OCI-LY7 (cell line): ENCODE measurements at regions of chr6 and their contacts with region 1.

Region 1: DNA sequence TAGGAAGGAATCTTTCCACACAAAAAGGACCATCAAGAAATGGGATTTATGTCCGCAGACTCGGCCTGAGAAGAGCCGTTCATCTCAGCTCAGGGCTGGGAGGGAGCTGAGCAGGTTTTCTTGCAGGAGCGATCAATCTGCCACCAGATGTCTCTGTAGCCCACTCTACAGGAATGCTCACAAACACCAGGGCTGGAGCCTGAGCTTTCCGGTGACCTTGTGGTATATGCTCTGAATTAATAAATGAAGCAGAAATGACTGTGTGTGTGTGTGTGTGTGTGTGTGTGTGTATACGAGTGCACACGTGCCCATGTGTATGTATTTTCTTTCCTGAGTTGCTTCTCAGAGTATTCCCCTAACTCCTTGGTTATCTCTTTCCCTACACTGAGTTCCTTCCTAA is 12.0 kb downstream of the CD83 start:
- DNase-seq: peak; percentile 83
- H3K4me3 ChIP-seq: no peak overlapping the region
- H3K27ac ChIP-seq: no peak overlapping the region
- H3K4me1 ChIP-seq: peaks cover 43% of the 10 kb centered on the region
- CTCF ChIP-seq: peak; percentile 85

Region 2: GRCh38 chr6:13814176-13814937 is 315.2 kb before region 1 on chr6 and contains the start of gene MCUR1:
- CTCF ChIA-PET with region 1: no interaction called
- POLR2A ChIA-PET with region 1: no interaction called
- intact Hi-C with region 1: loop called (anchors 10 kb)
- DNase-seq: peak; percentile 94
- H3K4me3 ChIP-seq: peak within 1 kb of the TSS; percentile 86
- H3K27ac ChIP-seq: peak within 1 kb of the TSS; percentile 87
- H3K4me1 ChIP-seq: peaks cover 30% of the 10 kb centered on the region
- CTCF ChIP-seq: peak; percentile 38; the same call in 1 of the 2 replicates
- total RNA-seq, gene MCUR1: 11.9 and 17.3 TPM in 2 replicates

Region 3: DNA sequence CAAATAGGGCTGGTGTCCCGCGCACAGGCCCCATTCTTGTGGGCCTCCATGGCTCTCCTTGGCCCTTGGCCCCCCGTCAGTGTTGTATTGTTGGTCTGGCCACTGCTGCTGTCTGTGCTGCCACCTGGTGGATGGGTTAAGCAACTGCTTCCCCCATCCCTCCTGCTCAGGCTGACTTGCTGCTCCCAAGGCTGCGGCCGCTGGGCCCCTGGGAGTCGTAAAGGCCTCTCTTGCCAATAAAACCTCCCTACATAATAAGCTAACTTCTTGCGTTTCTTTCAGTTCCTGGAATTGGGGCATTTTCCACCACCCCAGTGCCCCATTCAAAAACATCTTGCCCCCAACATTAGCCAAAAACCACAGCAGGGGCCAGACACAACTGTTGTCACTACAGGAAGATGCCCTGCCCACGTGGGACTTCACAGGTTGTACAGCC is 15.1 kb after region 1 on chr6:
- CTCF ChIA-PET with region 1: interaction called, 5 read pairs
- POLR2A ChIA-PET with region 1: no interaction called
- intact Hi-C with region 1: loop called (anchors 2 kb)
- DNase-seq: peak; percentile 80
- H3K4me3 ChIP-seq: no peak overlapping the region
- H3K27ac ChIP-seq: no peak overlapping the region
- H3K4me1 ChIP-seq: no peaks in the 10 kb centered on the region
- CTCF ChIP-seq: peak; percentile 96

Region 4: GRCh38 chr6:15131651-15132061 is 1002.1 kb after region 1 on chr6:
- CTCF ChIA-PET with region 1: no interaction called
- POLR2A ChIA-PET with region 1: no interaction called
- intact Hi-C with region 1: no loop called
- DNase-seq: no peak
- H3K4me3 ChIP-seq: no peak overlapping the region
- H3K27ac ChIP-seq: no peak overlapping the region
- H3K4me1 ChIP-seq: no peaks in the 10 kb centered on the region
- CTCF ChIP-seq: no peak